Activated CD4-positive, alpha-beta T cell treated with anti-CD3 and anti-CD28 coated beads for 36 hours (primary cell): ENCODE measurements at regions of chr19 and their contacts with region 1.

Region 1: DNA sequence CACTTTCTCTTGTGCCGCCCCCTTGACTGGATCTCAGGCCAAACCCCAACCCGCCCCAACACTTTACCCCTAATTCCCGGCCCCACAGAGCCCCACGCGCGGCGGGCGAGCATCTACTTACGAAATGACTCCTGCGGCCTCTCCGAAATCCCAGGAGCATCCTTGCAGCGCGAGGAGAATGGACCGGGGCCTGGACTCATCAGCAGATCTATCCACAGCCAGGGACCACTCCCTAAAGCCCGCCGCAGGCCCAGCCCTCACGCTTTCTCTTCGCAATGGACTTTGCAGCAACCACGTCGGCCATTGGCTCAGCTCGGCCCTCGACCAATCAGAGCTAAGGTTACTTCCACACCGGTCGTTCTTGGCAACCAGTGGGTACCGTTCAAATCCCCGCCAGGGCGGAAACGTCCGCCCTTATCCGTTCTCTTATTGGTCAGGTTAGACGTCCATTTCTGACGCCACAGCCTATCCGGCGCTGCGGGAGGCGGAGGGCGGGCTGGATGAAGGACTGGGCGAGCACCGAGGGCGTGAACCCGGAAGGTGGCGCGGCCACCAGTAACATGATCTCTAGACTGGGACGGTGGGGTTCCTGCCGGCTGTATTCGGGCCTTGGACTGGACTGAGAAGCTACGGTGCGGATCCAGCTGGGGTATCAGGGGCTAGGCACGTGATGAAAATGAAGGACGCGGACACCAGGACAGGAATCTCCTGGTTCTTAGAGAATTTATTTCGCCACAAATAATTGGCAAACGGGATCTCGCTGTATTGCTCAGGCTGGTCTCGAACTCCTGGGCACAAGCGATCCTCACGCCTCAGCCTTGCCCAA is at the starts of genes CEP89 and FAAP24:
- DNase-seq: peak; percentile 98
- ATAC-seq: peak; percentile 100
- H3K4me3 Mint-ChIP-seq: peak within 1 kb of the TSS; percentile 98
- H3K27ac Mint-ChIP-seq: peak within 1 kb of the TSS; percentile 94
- H3K4me1 Mint-ChIP-seq: peaks cover 11% of the 10 kb centered on the region
- H3K27me3 Mint-ChIP-seq: no peaks in the 10 kb centered on the region
- total RNA-seq, gene CEP89: 16.2 to 18.5 TPM
- total RNA-seq, gene FAAP24: 8.9 to 11.9 TPM

Region 2: GRCh38 chr19:32345261-32346207 is 626.4 kb before region 1 on chr19 and contains the start of gene ZNF507:
- CTCF ChIA-PET with region 1: no interaction called
- POLR2A ChIA-PET with region 1: no interaction called
- intact Hi-C with region 1: loop called in 1 of 2 experiments (anchors 2 kb)
- DNase-seq: peak; percentile 93
- ATAC-seq: peak; percentile 82
- H3K4me3 Mint-ChIP-seq: peak within 1 kb of the TSS; percentile 92
- H3K27ac Mint-ChIP-seq: peak within 1 kb of the TSS; percentile 95
- H3K4me1 Mint-ChIP-seq: peaks cover 42% of the 10 kb centered on the region
- H3K27me3 Mint-ChIP-seq: peaks cover 2% of the 10 kb centered on the region
- total RNA-seq, gene ZNF507: 25.2 to 27.6 TPM

Region 3: DNA sequence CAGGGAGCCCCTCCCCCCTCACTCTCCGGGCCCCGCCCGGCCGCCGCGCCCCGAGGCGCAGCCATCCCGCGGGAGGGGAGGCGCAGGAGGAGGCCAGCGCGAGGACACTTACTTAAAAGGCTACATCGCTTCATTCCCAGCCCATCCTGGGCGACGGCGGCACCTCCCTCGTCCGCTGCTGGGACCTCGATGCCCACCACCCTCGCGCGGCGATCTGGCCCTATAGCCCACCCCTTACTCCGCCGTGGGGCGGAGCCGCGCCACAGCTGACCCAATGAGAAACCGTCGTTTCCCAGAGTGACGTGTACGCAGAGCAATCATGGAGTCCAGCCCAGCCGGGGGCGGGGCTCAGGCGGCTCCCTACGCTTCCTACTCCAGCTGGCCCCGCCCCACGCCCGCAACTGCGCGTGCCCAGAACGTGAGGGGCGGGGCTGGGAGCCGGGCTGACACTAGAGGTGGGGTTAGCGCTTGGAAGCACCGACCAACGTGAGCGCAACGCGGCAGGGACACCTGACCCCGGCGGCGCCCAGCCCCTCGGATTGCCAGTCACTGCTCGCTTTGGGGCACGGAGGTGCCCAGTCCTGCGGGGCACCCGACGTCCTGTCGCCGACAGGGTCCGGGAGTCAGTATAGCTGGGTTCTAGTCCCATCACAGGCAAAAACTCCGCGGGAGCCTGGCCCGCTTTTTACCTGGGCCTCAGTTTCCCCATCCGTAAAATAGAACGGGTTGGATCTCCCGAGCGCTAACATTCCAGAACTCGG is 296.8 kb before region 1 on chr19 and contains the start of gene ANKRD27:
- CTCF ChIA-PET with region 1: no interaction called
- POLR2A ChIA-PET with region 1: no interaction called
- intact Hi-C with region 1: loop called (anchors 1 kb)
- DNase-seq: peak; percentile 99
- ATAC-seq: peak; percentile 95
- H3K4me3 Mint-ChIP-seq: peak within 1 kb of the TSS; percentile 78
- H3K27ac Mint-ChIP-seq: peak within 1 kb of the TSS; percentile 69
- H3K4me1 Mint-ChIP-seq: peaks cover 30% of the 10 kb centered on the region
- H3K27me3 Mint-ChIP-seq: peaks cover 11% of the 10 kb centered on the region
- total RNA-seq, gene ANKRD27: 36.6 to 37.0 TPM

Region 4: DNA sequence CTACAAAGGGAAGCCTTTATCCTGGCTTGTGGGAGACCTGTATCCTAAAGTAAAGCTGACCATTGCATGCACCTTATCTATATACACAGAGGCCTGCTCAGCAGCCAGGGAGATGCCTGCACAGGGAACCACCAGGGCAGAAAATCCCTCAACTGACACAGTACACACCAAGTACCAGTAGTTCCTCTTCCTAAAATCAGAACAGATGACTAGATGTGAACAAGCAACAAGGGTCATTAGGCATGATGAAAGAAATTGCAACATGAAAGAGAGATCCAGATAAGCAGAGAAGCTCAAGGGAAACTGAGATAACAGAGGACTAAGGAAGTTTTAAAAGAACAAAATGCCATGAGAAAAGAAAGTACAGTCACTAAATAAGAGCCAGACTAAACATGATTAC is 62.7 kb before region 1 on chr19:
- CTCF ChIA-PET with region 1: no interaction called
- POLR2A ChIA-PET with region 1: interaction called, 11 read pairs
- intact Hi-C with region 1: no loop called
- DNase-seq: no peak
- ATAC-seq: no peak
- H3K4me3 Mint-ChIP-seq: no peak overlapping the region
- H3K27ac Mint-ChIP-seq: no peak overlapping the region
- H3K4me1 Mint-ChIP-seq: no peaks in the 10 kb centered on the region
- H3K27me3 Mint-ChIP-seq: no peaks in the 10 kb centered on the region

Region 5: GRCh38 chr19:33080761-33081681 is 109.1 kb after region 1 on chr19 and contains the start of gene GPATCH1:
- CTCF ChIA-PET with region 1: interaction called, 5 read pairs
- POLR2A ChIA-PET with region 1: no interaction called
- intact Hi-C with region 1: loop called (anchors 1 kb)
- DNase-seq: peak; percentile 93
- ATAC-seq: peak; percentile 94
- H3K4me3 Mint-ChIP-seq: peak within 1 kb of the TSS; percentile 99
- H3K27ac Mint-ChIP-seq: peak within 1 kb of the TSS; percentile 97
- H3K4me1 Mint-ChIP-seq: peaks cover 16% of the 10 kb centered on the region
- H3K27me3 Mint-ChIP-seq: no peaks in the 10 kb centered on the region
- total RNA-seq, gene GPATCH1: 9.5 to 11.1 TPM

Region 6: DNA sequence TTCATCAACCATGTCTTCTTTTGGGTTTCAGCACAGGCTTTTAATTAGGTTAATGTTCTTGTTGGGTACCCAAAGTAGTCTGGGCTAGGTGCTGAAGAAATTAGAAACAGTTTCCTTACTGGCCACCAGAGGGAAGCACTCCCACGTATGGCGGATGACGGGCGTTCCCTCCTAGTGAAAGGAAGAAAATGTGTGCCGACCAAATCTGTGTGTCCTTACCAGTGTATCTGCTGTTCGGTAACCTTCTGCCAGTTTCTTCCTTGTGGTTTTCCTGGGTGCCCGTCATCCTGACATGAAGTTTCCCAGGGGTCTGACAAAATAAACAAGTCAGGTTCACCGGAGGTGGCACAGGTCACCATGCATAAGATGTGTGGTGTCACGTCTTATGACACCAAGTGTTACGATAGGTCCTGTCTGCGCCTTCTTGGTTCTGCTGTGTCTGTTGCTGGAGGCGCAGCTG is 154.0 kb after region 1 on chr19:
- CTCF ChIA-PET with region 1: interaction called, 4 read pairs
- POLR2A ChIA-PET with region 1: no interaction called
- intact Hi-C with region 1: loop called in 1 of 2 experiments (anchors 2 kb)
- DNase-seq: peak; percentile 76
- ATAC-seq: peak; percentile 96
- H3K4me3 Mint-ChIP-seq: no peak overlapping the region
- H3K27ac Mint-ChIP-seq: no peak overlapping the region
- H3K4me1 Mint-ChIP-seq: peaks cover 4% of the 10 kb centered on the region
- H3K27me3 Mint-ChIP-seq: no peaks in the 10 kb centered on the region